ENCODE measurements at regions of chr15 and their contacts with region 1.

Region 1: DNA sequence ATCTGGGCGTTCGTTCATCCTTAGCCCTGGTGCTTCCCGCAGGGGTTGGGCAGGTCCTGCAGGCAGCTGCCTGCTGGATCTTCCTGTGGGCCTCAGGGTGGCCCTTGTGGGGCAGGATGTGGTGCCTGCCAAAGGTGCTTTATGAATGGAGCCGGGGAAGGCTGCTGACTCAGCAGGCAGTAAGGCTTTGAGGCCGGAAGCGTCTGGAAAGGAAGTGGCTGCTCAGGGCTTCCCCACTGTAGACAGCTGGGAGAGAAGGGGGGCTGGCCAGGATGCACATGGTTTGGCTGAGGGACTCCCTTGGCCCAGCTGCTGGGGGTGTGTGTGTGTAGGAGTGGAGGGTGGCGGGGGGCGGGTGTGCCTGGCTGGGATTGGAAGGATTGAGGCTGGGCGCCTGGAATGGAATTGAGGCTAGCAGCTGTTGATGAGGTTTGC is 12.9 kb downstream of the CD276 start:
- DNase-seq: peak; percentile 88 to 94
- ATAC-seq: peak; percentile 89
- H3K4me3 ChIP-seq: no peak overlapping the region
- H3K27ac ChIP-seq: no peak overlapping the region
- H3K4me1 ChIP-seq: peaks cover 3 to 4% of the 10 kb centered on the region in 2 donors
- H3K27me3 ChIP-seq: no peaks in the 10 kb centered on the region

Region 2: DNA sequence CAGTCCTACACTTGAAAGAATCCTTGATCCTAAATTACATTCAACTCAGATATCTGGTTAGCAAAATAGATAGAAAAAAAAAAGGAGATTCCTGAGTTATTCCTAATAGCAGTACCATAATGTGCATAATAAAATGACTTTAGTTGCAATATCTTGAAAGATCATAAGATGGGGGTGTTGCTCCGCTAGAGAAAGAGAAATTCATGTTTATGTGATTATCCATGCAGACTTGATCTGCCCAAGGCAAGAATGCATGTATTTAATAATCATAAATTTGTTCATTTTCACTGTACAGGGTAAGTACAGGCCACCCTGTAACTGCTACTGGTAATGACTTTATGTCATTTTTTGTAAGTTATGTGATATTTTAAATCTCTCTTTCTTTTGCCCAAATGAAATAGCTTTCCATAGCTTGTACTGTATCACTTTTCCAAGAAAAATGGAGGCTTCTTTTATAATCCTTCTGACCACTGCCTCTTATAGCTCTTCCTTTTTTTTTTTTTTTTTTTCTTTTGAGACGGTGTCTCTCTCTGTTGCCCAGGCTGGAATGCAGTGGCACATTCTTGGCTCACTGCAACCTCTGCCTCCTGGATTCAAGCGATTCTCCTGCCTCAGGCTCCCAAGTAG is 412.8 kb before region 1 on chr15:
- intact Hi-C with region 1: loop called (anchors 10 kb)
- DNase-seq: no peak
- ATAC-seq: no peak
- H3K4me3 ChIP-seq: no peak overlapping the region
- H3K27ac ChIP-seq: no peak overlapping the region
- H3K4me1 ChIP-seq: peaks cover 4% of the 10 kb centered on the region in 2 donors
- H3K27me3 ChIP-seq: no peaks in the 10 kb centered on the region

Region 3: GRCh38 chr15:73560501-73561117 is 136.4 kb before region 1 on chr15:
- intact Hi-C with region 1: loop called in 1 of 2 experiments (anchors 5 kb)
- DNase-seq: no peak
- ATAC-seq: no peak
- H3K4me3 ChIP-seq: no peak overlapping the region
- H3K27ac ChIP-seq: no peak overlapping the region
- H3K4me1 ChIP-seq: no peaks in the 10 kb centered on the region
- H3K27me3 ChIP-seq: no peaks in the 10 kb centered on the region

Region 4: GRCh38 chr15:73633111-73633990 is 63.7 kb before region 1 on chr15 and contains the start of gene NPTN:
- intact Hi-C with region 1: loop called (anchors 2 kb)
- DNase-seq: peak; percentile 100
- ATAC-seq: peak; percentile 98
- H3K4me3 ChIP-seq: peak within 1 kb of the TSS; percentile 74 to 98
- H3K27ac ChIP-seq: peak within 1 kb of the TSS; percentile 61 to 95
- H3K4me1 ChIP-seq: no peaks in the 10 kb centered on the region
- H3K27me3 ChIP-seq: no peaks in the 10 kb centered on the region
- total RNA-seq, gene NPTN: 169 to 221 TPM

Region 5: GRCh38 chr15:73677146-73677607 is 19.9 kb before region 1 on chr15:
- intact Hi-C with region 1: loop called (anchors 1 to 2 kb)
- DNase-seq: peak in 1 of 2 donors; percentile 74
- ATAC-seq: peak; percentile 92
- H3K4me3 ChIP-seq: no peak overlapping the region
- H3K27ac ChIP-seq: no peak overlapping the region
- H3K4me1 ChIP-seq: no peaks in the 10 kb centered on the region
- H3K27me3 ChIP-seq: peaks cover 0 to 2% of the 10 kb centered on the region in 2 donors

Region 6: DNA sequence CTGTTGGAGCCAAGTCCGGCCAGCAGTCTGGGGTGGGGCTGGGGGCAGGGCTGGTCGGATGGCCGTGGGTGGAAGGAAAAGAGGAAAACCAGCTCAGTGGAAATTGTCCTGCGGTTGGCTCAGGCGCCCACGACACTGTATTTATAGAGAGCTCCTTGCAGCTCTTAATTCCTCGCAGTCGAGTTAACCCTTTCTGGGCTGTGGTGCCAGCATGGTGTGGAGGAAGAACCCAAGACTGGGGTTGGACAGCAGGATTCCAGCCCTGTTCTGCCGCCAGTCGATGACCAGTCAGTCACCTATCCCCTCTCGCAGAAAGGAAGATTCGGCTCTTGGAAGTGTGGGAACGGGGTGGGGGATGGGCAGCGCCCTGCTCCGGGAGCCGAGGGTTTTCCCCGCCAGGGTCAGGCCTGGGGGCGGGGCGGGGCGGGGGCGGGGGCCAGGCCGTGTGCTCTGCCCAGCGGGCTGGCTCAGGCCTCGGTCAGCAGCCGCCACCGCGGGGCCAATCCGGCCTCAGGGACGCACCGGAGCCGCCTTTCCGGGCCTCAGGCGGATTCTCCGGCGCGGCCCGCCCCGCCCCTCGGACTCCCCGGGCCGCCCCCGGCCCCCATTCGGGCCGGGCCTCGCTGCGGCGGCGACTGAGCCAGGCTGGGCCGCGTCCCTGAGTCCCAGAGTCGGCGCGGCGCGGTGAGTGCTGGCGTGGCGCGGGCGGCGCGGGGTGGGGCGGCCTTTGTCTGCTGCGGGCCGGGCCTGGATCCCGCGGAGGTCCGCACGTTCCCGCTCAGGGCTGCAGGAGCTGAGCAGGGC is 13.1 kb before region 1 on chr15 and contains the start of gene CD276:
- intact Hi-C with region 1: loop called (anchors 2 kb)
- DNase-seq: peak; percentile 89 to 93
- ATAC-seq: peak; percentile 85
- H3K4me3 ChIP-seq: peak within 1 kb of the TSS; percentile 89 to 94
- H3K27ac ChIP-seq: peak within 1 kb of the TSS; percentile 59 to 79
- H3K4me1 ChIP-seq: peaks cover 0 to 2% of the 10 kb centered on the region in 2 donors
- H3K27me3 ChIP-seq: no peaks in the 10 kb centered on the region
- total RNA-seq, gene CD276: 65.2 to 67.9 TPM

Measured in aorta (tissue), 5 donors.